T-cell (primary cell): ENCODE measurements at regions of chr3 and their contacts with region 1.

Region 1: DNA sequence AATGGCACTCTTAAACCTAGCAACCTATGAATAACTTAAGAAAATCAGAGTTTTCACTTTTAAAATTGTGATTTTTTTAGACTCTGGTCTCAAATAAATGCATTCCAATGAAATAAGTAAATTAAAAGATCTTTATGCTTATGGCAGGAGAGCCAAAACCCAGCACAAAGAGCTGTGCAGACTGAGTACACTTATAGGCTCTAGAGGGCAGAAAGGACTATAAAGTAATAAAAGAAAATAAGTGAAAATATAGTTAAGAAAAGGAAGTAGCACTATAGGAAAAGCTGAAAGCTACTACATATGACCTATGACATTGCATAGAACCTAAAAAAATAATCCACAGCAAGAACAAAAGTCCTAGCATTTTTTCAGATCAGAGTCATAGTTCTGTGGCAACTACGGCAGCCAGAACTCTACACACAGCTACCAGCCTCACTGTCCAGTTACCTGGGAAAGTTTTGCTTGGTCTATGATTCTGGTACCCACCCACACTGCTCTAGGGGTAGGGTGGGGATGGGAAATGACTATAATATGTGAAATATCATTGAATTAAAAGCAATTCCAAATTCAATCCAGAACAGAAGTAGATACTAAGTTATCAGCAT is 30.5 kb downstream of the CLASP2 start:
- DNase-seq: no peak
- ATAC-seq: no peak
- H3K4me3 ChIP-seq: no peak overlapping the region
- H3K4me3 Mint-ChIP-seq: no peak overlapping the region
- H3K27ac ChIP-seq: no peak overlapping the region
- H3K27ac Mint-ChIP-seq: no peak overlapping the region
- H3K4me1 ChIP-seq: no peaks in the 10 kb centered on the region
- H3K4me1 Mint-ChIP-seq: peaks cover 0 to 1% (median 0%) of the 10 kb centered on the region in 3 donors
- H3K27me3 ChIP-seq: no peaks in the 10 kb centered on the region
- H3K27me3 Mint-ChIP-seq: no peaks in the 10 kb centered on the region

Region 2: GRCh38 chr3:33505027-33505426 is 182.5 kb before region 1 on chr3:
- CTCF ChIA-PET with region 1: no interaction called
- POLR2A ChIA-PET with region 1: no interaction called
- DNase-seq: no peak
- ATAC-seq: no peak
- H3K4me3 ChIP-seq: no peak overlapping the region
- H3K4me3 Mint-ChIP-seq: no peak overlapping the region
- H3K27ac ChIP-seq: no peak overlapping the region
- H3K27ac Mint-ChIP-seq: no peak overlapping the region
- H3K4me1 ChIP-seq: no peaks in the 10 kb centered on the region
- H3K4me1 Mint-ChIP-seq: no peaks in the 10 kb centered on the region
- H3K27me3 ChIP-seq: no peaks in the 10 kb centered on the region
- H3K27me3 Mint-ChIP-seq: no peaks in the 10 kb centered on the region

Region 3: DNA sequence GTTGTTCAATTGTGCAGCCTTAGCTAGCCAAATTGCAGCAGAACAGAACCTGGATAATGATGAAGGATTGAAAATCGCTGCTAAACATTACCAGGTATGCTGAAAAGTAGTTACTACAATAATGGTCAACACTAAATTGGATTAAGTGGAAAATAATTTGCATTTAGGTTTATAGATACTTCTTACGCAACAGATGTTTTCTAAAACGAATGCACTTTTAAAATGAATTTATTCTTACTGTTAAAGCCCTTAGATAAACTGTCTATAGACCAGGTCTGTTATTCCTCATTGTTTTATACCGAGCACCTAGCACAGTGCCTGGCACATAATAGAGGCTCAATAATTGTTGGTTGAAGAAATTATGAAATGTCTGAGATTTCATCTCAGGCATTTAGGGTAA is 134.5 kb after region 1 on chr3:
- CTCF ChIA-PET with region 1: no interaction called
- POLR2A ChIA-PET with region 1: interaction called in 1 of 2 experiments, 14 read pairs
- DNase-seq: no peak
- ATAC-seq: no peak
- H3K4me3 ChIP-seq: no peak overlapping the region
- H3K4me3 Mint-ChIP-seq: no peak overlapping the region
- H3K27ac ChIP-seq: no peak overlapping the region
- H3K27ac Mint-ChIP-seq: no peak overlapping the region
- H3K4me1 ChIP-seq: no peaks in the 10 kb centered on the region
- H3K4me1 Mint-ChIP-seq: peaks cover 6 to 15% (median 9%) of the 10 kb centered on the region in 3 donors
- H3K27me3 ChIP-seq: no peaks in the 10 kb centered on the region
- H3K27me3 Mint-ChIP-seq: no peaks in the 10 kb centered on the region